Endothelial cell of umbilical vein (primary cell): ENCODE measurements at regions of chr15 and their contacts with region 1.

Region 1: DNA sequence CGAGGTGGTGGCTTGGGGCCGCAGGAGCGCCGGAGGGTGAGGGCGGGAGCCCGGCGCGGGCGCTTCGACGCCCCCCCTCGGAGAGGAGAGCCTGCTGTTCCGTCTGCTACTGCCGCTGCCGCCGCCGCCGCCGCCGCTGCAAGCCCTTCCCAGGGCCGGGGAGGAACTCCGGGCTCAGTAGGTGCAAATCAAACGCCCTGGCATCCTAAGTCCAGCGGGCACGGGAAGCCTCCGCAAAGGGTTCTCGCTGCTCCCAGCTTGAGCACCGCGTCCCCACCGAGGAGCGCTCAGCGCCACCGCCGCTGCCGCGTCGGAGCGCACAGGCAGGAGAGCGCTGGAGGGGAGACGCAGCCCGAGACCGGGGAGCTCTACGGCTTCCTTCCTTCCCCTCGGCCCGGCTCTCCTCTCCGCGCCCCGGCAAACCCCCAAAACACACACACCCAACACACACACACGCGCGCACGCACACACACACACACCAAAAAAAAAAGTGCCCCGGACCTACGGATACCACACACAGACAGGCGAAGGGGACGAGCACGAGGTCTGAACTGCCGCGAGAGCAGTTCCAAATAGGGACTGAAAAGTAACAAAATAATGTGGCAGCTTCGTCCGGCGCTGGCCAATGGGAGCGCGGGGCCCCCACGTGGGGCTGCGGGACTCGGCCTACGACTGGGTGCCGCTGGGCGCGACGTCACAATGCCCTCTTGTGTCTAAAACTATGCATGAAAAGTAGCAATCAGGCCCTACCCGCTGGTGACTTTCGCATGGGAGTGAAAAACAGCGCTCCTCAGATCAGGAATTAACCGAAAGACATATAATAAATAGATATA is at the start of gene TLE3:
- DNase-seq: peak; percentile 99
- H3K4me3 ChIP-seq: peak within 1 kb of the TSS; percentile 88 to 98 (median 89)
- H3K27ac ChIP-seq: peak within 1 kb of the TSS; percentile 85
- H3K4me1 ChIP-seq: peaks cover 53% of the 10 kb centered on the region
- H3K27me3 ChIP-seq: no peaks in the 10 kb centered on the region
- CTCF ChIP-seq: peak in 1 of 2 donors; percentile 39
- POLR2A ChIP-seq: peak; percentile 88
- total RNA-seq, gene TLE3: 53.8 and 56.9 TPM in 2 replicates

Region 2: GRCh38 chr15:69475769-69476358 is 621.7 kb before region 1 on chr15:
- CTCF ChIA-PET with region 1: interaction called, 3 read pairs
- POLR2A ChIA-PET with region 1: no interaction called
- dilution Hi-C with region 1: no loop called
- intact Hi-C with region 1: loop called (anchors 2 kb)
- DNase-seq: peak; percentile 79
- H3K4me3 ChIP-seq: no peak overlapping the region
- H3K27ac ChIP-seq: no peak overlapping the region
- H3K4me1 ChIP-seq: peaks cover 15% of the 10 kb centered on the region
- H3K27me3 ChIP-seq: no peaks in the 10 kb centered on the region
- CTCF ChIP-seq: peak; percentile 90 to 91
- POLR2A ChIP-seq: no peak

Region 3: GRCh38 chr15:69729161-69729748 is 368.3 kb before region 1 on chr15:
- CTCF ChIA-PET with region 1: no interaction called
- POLR2A ChIA-PET with region 1: no interaction called
- dilution Hi-C with region 1: no loop called
- intact Hi-C with region 1: loop called (anchors 1 kb)
- DNase-seq: peak; percentile 39
- H3K4me3 ChIP-seq: no peak overlapping the region
- H3K27ac ChIP-seq: no peak overlapping the region
- H3K4me1 ChIP-seq: no peaks in the 10 kb centered on the region
- H3K27me3 ChIP-seq: peaks cover 6 to 12% of the 10 kb centered on the region in 2 experiments
- CTCF ChIP-seq: peak; percentile 83 to 84
- POLR2A ChIP-seq: no peak

Region 4: GRCh38 chr15:70014860-70015490 is 82.6 kb before region 1 on chr15:
- CTCF ChIA-PET with region 1: no interaction called
- POLR2A ChIA-PET with region 1: no interaction called
- dilution Hi-C with region 1: no loop called
- intact Hi-C with region 1: no loop called
- DNase-seq: no peak
- H3K4me3 ChIP-seq: no peak overlapping the region
- H3K27ac ChIP-seq: no peak overlapping the region
- H3K4me1 ChIP-seq: no peaks in the 10 kb centered on the region
- H3K27me3 ChIP-seq: peaks cover 0 to 2% of the 10 kb centered on the region in 2 experiments
- CTCF ChIP-seq: no peak
- POLR2A ChIP-seq: no peak

Region 5: DNA sequence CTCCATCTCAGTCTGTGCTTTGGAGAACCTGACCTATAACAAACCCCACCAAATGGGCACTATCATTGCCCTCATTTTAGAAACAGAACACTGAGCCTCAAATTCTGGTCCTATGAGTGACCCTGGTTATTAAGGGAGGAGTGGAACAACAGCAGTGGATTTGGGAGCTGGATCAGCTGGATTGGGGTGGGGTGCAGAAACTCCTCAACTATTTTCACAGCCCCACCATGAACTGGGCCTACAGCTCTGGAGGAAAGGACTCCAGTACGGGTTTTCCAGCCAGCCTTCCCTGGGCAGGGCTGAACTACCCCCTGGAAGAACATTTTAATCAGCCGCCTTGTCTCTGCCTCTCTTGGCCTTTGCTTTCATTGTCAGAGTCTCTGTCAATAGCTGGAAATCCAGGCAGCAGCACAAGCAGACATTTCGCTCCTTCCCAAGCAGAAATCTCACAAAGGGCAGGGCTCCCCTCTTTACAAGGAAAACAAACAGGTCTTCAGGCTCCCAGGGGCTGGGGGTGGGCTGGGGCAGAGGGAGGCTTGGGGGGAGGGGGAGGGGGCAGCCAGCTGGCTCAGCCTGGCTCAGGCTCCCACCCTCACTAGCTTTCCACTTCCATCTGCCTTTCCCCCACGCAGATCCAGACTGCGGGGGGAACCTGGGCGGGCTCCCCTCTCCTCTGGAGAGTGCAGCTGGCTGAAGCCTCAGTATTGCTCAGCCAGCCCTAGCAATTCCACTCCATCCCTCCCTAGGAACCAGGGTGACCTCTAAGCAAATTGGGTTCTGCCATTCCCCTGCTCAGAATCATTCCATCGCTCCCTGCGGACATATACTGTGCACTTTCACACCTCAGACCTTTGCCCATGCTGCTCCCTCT is 13.9 kb after region 1 on chr15:
- CTCF ChIA-PET with region 1: interaction called, 60 read pairs
- POLR2A ChIA-PET with region 1: interaction called, 26 read pairs
- dilution Hi-C with region 1: no loop called
- intact Hi-C with region 1: loop called (anchors 1 kb)
- DNase-seq: peak; percentile 91
- H3K4me3 ChIP-seq: no peak overlapping the region
- H3K27ac ChIP-seq: no peak overlapping the region
- H3K4me1 ChIP-seq: peaks cover 13% of the 10 kb centered on the region
- H3K27me3 ChIP-seq: peaks cover 4 to 7% of the 10 kb centered on the region in 2 experiments
- CTCF ChIP-seq: no peak
- POLR2A ChIP-seq: no peak

Region 6: GRCh38 chr15:70182857-70183695 is 85.5 kb after region 1 on chr15:
- CTCF ChIA-PET with region 1: interaction called, 12 read pairs
- POLR2A ChIA-PET with region 1: no interaction called
- dilution Hi-C with region 1: no loop called
- intact Hi-C with region 1: loop called (anchors 5 kb)
- DNase-seq: no peak
- H3K4me3 ChIP-seq: no peak overlapping the region
- H3K27ac ChIP-seq: no peak overlapping the region
- H3K4me1 ChIP-seq: no peaks in the 10 kb centered on the region
- H3K27me3 ChIP-seq: peaks cover 0 to 5% of the 10 kb centered on the region in 2 experiments
- CTCF ChIP-seq: no peak
- POLR2A ChIP-seq: no peak

Region 7: DNA sequence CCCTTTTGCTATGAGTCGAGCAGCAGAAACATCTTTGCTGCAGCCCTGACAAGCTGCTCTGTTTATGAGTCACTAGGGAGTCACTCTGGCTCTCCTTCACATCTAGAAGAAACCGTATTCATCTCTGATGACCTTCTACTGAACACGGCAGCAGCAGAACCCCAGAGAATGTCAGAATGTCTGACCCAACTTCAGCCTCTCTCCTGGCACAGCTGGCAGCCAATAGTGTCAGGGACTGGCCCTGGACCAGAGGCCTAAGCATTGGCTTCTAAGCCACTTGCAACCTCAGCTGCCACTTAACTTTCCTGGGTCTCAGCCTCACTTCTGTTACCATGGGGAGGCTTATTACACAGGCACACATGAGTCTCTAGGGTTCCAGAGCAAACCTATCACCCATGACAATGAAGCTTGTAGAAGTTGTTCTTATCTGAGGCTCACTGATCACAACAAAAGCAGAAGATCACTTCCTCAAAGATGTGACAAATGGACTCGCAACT is 184.3 kb after region 1 on chr15:
- CTCF ChIA-PET with region 1: no interaction called
- POLR2A ChIA-PET with region 1: no interaction called
- dilution Hi-C with region 1: no loop called
- intact Hi-C with region 1: no loop called
- DNase-seq: no peak
- H3K4me3 ChIP-seq: no peak overlapping the region
- H3K27ac ChIP-seq: no peak overlapping the region
- H3K4me1 ChIP-seq: no peaks in the 10 kb centered on the region
- H3K27me3 ChIP-seq: no peaks in the 10 kb centered on the region
- CTCF ChIP-seq: no peak
- POLR2A ChIP-seq: no peak

Region 8: GRCh38 chr15:70488002-70488605 is 390.6 kb after region 1 on chr15:
- CTCF ChIA-PET with region 1: interaction called, 5 read pairs
- POLR2A ChIA-PET with region 1: no interaction called
- dilution Hi-C with region 1: no loop called
- intact Hi-C with region 1: loop called (anchors 2 kb)
- DNase-seq: peak; percentile 77
- H3K4me3 ChIP-seq: no peak overlapping the region
- H3K27ac ChIP-seq: no peak overlapping the region
- H3K4me1 ChIP-seq: peaks cover 4% of the 10 kb centered on the region
- H3K27me3 ChIP-seq: peaks cover 0 to 4% of the 10 kb centered on the region in 2 experiments
- CTCF ChIP-seq: peak; percentile 89 to 90
- POLR2A ChIP-seq: no peak

Region 9: GRCh38 chr15:70799667-70800450 is 702.3 kb after region 1 on chr15:
- CTCF ChIA-PET with region 1: no interaction called
- POLR2A ChIA-PET with region 1: no interaction called
- dilution Hi-C with region 1: no loop called
- intact Hi-C with region 1: loop called (anchors 10 kb)
- DNase-seq: peak; percentile 94
- H3K4me3 ChIP-seq: no peak overlapping the region
- H3K27ac ChIP-seq: peak overlapping the region; percentile 66
- H3K4me1 ChIP-seq: peaks cover 33% of the 10 kb centered on the region
- H3K27me3 ChIP-seq: no peaks in the 10 kb centered on the region
- CTCF ChIP-seq: no peak
- POLR2A ChIP-seq: no peak